Mammary epithelial cell (primary cell): ENCODE measurements at regions of chr5 and their contacts with region 1.

Region 1: DNA sequence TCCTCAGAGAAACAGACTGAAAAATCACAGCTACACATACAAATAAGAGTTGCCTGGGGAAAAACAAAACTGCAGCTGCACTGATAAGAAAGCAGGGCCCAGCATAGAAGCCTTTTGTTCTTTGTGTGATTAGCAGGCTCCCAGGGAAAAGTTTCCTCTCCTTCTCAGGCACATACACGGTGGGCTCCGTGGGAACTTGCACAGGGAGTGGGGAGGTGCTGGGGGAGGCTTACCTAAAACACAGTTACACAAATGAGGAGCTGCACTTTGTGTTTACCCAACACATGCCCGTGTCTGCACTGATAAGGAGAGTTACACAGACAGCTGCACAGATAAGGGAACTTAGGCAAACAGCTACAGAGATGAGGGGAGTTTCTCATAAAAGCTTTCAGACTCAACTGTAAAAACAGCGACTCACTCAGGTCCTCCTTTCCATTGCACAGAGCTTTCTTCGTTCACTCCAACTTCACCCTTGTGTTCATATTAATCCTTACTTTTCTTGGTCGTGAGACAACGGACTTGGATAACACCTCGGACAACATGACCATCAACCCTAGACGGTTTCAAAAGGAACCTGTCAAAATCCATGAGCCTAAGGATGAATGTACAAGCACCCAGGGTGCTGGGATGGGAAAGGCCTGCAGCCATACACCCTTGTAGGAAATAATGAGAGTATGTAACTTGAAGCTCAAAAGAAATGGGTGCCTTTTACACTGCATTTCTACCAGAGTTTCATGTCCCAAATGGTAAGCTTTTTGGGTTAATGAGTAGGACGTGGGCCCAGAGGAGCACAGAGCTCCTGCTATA is 50.8 kb downstream of the SERINC5 start:
- DNase-seq: no peak
- H3K4me3 ChIP-seq: no peak overlapping the region
- H3K27ac ChIP-seq: no peak overlapping the region
- H3K4me1 ChIP-seq: peaks cover 13% of the 10 kb centered on the region
- H3K27me3 ChIP-seq: no peaks in the 10 kb centered on the region
- CTCF ChIP-seq: no peak

Region 2: GRCh38 chr5:79712741-79713140 is 492.3 kb before region 1 on chr5:
- CTCF ChIA-PET with region 1: no interaction called
- dilution Hi-C with region 1: no loop called
- in situ Hi-C with region 1: no loop called
- intact Hi-C with region 1: no loop called
- DNase-seq: no peak
- H3K4me3 ChIP-seq: no peak overlapping the region
- H3K27ac ChIP-seq: no peak overlapping the region
- H3K4me1 ChIP-seq: no peaks in the 10 kb centered on the region
- H3K27me3 ChIP-seq: no peaks in the 10 kb centered on the region
- CTCF ChIP-seq: no peak

Region 3: DNA sequence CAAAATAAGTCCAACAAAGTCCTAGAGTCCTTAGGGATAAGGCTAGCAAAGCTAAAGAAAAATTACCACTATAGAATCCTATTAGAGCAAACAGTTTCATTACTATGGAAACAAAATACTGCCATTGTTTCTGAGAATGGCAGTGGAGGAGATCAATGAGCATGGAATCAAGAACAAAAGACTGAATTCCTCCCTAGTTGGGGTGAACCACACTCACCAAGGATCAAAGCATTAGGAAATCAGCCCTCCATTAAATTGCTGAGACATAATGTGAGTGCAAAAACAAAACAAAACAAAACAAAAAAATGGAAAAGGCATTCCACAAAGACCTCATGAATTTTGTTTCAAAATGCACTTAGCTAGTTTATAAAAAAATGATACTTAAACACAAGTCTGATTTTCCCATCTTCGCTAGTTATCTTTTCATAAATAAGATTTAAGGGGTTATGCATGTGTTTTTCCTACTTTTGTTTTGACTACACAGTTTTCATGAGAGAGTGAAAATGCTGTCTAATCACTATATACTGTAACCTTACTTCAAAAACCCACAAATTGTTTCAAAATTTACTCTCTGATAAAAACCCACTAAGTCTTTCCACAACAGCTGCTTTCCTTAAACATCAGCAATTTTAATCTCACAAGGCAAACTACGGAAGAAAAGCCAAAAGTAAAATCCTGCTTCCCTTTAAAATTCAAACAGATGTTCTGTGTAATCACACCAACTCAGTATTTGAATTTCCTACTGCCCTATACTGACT is 41.2 kb after region 1 on chr5:
- CTCF ChIA-PET with region 1: no interaction called
- dilution Hi-C with region 1: loop called (anchors 5 kb)
- in situ Hi-C with region 1: no loop called
- intact Hi-C with region 1: no loop called
- DNase-seq: peak; percentile 42
- H3K4me3 ChIP-seq: peak overlapping the region in 1 of 3 experiments; percentile 8
- H3K27ac ChIP-seq: peak overlapping the region; percentile 98
- H3K4me1 ChIP-seq: peaks cover 30% of the 10 kb centered on the region
- H3K27me3 ChIP-seq: no peaks in the 10 kb centered on the region
- CTCF ChIP-seq: no peak

Region 4: DNA sequence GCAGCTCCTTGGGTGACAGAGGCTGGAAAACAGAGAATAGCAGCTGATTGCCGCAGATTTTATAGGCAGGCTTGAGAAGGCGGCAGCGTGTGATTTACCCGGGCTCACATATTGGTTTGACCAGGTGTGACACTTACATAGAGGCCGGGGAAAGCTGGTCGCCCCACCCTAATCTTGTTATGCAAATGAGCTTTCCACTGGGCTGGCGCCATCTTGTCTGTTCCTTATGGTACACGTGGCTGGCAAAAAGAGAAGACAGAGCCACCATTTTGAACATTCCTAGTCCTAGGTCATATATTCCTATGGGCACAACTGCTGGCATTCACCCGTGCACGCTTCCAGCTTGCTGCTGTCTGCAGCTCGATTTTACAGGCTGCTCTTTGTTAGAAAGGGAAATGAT is 103.5 kb after region 1 on chr5:
- CTCF ChIA-PET with region 1: no interaction called
- dilution Hi-C with region 1: loop called (anchors 5 kb)
- in situ Hi-C with region 1: no loop called
- intact Hi-C with region 1: no loop called
- DNase-seq: no peak
- H3K4me3 ChIP-seq: no peak overlapping the region
- H3K27ac ChIP-seq: no peak overlapping the region
- H3K4me1 ChIP-seq: no peaks in the 10 kb centered on the region
- H3K27me3 ChIP-seq: no peaks in the 10 kb centered on the region
- CTCF ChIP-seq: no peak